ENCODE measurements at regions of chr21 and their contacts with region 1.

Region 1: DNA sequence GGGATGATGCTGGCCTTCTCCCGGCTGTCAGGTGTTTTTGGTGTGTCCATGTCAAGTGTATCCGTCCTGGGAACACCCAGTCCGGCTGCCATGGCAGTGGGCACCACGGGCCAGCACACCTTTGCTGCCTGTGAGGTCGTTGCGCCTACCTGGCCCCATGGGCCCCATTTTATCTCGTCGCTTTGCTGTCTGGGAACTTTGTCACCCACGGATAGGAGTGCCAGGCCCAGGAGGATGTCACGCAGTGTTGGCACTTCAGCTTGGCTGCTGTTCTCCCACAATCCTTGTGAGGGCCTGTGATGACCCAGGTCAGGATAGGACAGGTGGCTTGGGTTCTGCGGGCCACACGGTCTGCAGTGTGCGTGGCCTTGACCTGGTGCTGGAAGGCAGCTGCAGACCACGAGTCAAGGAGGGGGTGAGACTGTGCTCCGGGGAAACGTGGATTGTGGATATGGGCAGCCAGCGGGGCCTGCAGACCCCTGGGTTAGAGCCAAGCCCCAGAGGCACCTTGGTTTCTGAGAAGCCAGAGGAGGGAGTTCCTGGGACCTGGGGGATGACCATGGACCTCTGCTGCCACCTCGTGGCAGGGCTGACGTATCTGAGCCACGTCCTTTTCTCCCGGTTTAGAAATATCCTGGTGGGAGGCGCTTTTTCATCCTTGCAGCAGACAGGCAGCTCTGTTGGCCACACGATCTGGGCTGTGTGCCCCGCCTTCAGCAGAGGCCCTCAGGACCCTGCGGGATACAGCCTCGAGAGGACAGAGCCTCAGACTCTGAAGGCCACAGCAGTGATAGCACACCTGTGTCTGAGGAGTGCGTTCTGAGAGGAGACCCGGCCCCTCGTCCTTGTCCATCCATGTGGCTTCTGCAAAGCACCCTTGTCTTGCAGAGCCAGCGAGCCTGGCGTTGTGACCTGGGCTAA is 161.1 kb upstream of the COL6A1 start:
- DNase-seq: peak; percentile 73 to 79 (median 75)
- H3K4me3 ChIP-seq: no peak overlapping the region
- H3K4me3 Mint-ChIP-seq: no peak overlapping the region
- H3K27ac ChIP-seq: peak overlapping the region in 1 of 2 donors; percentile 53
- H3K27ac Mint-ChIP-seq: peak overlapping the region in 6 of 7 donors; percentile 50 to 85 (median 66)
- H3K4me1 ChIP-seq: peaks cover 24 to 27% of the 10 kb centered on the region in 2 donors
- H3K4me1 Mint-ChIP-seq: peaks cover 29% of the 10 kb centered on the region
- H3K27me3 ChIP-seq: no peaks in the 10 kb centered on the region
- H3K27me3 Mint-ChIP-seq: no peaks in the 10 kb centered on the region
- CTCF ChIP-seq: peak; percentile 89

Region 2: GRCh38 chr21:44949779-44950198 is 870.6 kb before region 1 on chr21:
- intact Hi-C with region 1: loop called in 1 of 2 experiments (anchors 5 kb)
- DNase-seq: peak; percentile 54 to 78 (median 67)
- H3K4me3 ChIP-seq: no peak overlapping the region
- H3K4me3 Mint-ChIP-seq: no peak overlapping the region
- H3K27ac ChIP-seq: no peak overlapping the region
- H3K27ac Mint-ChIP-seq: no peak overlapping the region
- H3K4me1 ChIP-seq: no peaks in the 10 kb centered on the region
- H3K4me1 Mint-ChIP-seq: no peaks in the 10 kb centered on the region
- H3K27me3 ChIP-seq: no peaks in the 10 kb centered on the region
- H3K27me3 Mint-ChIP-seq: peaks cover 0 to 2% (median 2%) of the 10 kb centered on the region in 3 donors
- CTCF ChIP-seq: peak; percentile 92

Region 3: GRCh38 chr21:45140346-45140940 is 680.0 kb before region 1 on chr21:
- intact Hi-C with region 1: loop called (anchors 2 to 5 kb)
- DNase-seq: peak; percentile 74 to 81 (median 77)
- H3K4me3 ChIP-seq: no peak overlapping the region
- H3K4me3 Mint-ChIP-seq: no peak overlapping the region
- H3K27ac ChIP-seq: no peak overlapping the region
- H3K27ac Mint-ChIP-seq: peak overlapping the region in 2 of 7 donors; percentile 26 to 65
- H3K4me1 ChIP-seq: peaks cover 0 to 4% of the 10 kb centered on the region in 2 donors
- H3K4me1 Mint-ChIP-seq: peaks cover 6% of the 10 kb centered on the region
- H3K27me3 ChIP-seq: no peaks in the 10 kb centered on the region
- H3K27me3 Mint-ChIP-seq: peaks cover 0 to 2% (median 1%) of the 10 kb centered on the region in 3 donors
- CTCF ChIP-seq: peak; percentile 87

Region 4: DNA sequence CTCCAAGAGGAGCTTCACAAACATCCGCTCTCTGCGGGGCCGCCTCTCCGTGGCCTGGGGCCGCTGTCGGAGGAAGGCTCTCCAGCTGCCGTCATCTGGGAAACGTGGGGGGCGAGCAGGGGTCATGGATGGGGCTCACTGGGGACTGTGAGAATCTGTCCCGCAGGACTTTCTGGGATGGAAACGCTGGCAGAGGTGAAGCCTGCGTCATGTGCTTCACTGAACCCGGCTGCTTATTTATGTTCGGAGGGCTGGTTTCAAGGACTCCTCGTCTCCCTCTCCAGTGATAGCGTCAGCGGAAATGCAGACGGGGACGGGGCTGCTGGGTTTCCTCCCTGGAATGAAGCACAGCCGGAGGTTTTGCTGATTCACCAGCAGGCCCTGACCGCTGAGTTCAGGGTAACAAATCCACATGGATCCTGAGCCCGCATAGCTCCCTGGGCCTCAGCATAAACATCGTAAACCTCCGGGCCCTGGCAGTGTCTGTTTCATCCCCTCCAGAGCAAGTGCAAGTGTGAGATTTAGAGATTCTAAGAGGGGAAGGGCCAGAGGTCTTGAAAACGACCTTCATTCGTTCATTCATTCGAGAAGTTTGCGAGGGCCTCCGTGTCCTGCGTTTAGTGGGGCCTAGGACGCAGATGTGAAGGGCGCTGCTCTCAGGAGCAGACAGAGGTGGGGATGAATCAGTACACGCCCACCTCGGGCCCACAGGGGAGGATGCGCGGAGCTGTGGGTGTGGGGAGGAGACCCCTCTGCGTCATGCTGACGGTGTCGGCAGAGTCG is 525.7 kb before region 1 on chr21:
- intact Hi-C with region 1: loop called (anchors 2 to 5 kb)
- DNase-seq: peak; percentile 7 to 24 (median 23)
- H3K4me3 ChIP-seq: no peak overlapping the region
- H3K4me3 Mint-ChIP-seq: peak overlapping the region; percentile 27 to 70
- H3K27ac ChIP-seq: no peak overlapping the region
- H3K27ac Mint-ChIP-seq: peak overlapping the region in 1 of 7 donors; percentile 55
- H3K4me1 ChIP-seq: peaks cover 14 to 22% of the 10 kb centered on the region in 2 donors
- H3K4me1 Mint-ChIP-seq: peaks cover 26% of the 10 kb centered on the region
- H3K27me3 ChIP-seq: peaks cover 0 to 2% of the 10 kb centered on the region in 2 donors
- H3K27me3 Mint-ChIP-seq: peaks cover 6 to 13% (median 7%) of the 10 kb centered on the region in 3 donors
- CTCF ChIP-seq: no peak

Region 5: GRCh38 chr21:45554477-45555175 is 265.8 kb before region 1 on chr21:
- intact Hi-C with region 1: loop called (anchors 2 to 5 kb)
- DNase-seq: peak; percentile 64 to 74 (median 65)
- H3K4me3 ChIP-seq: peak overlapping the region; percentile 67 to 95 (median 90)
- H3K4me3 Mint-ChIP-seq: peak overlapping the region; percentile 95 to 96
- H3K27ac ChIP-seq: peak overlapping the region; percentile 71 to 97
- H3K27ac Mint-ChIP-seq: peak overlapping the region; percentile 96 to 99 (median 98)
- H3K4me1 ChIP-seq: peaks cover 40 to 43% of the 10 kb centered on the region in 2 donors
- H3K4me1 Mint-ChIP-seq: peaks cover 36% of the 10 kb centered on the region
- H3K27me3 ChIP-seq: no peaks in the 10 kb centered on the region
- H3K27me3 Mint-ChIP-seq: peaks cover 0 to 12% (median 6%) of the 10 kb centered on the region in 3 donors
- CTCF ChIP-seq: peak; percentile 78

Region 6: DNA sequence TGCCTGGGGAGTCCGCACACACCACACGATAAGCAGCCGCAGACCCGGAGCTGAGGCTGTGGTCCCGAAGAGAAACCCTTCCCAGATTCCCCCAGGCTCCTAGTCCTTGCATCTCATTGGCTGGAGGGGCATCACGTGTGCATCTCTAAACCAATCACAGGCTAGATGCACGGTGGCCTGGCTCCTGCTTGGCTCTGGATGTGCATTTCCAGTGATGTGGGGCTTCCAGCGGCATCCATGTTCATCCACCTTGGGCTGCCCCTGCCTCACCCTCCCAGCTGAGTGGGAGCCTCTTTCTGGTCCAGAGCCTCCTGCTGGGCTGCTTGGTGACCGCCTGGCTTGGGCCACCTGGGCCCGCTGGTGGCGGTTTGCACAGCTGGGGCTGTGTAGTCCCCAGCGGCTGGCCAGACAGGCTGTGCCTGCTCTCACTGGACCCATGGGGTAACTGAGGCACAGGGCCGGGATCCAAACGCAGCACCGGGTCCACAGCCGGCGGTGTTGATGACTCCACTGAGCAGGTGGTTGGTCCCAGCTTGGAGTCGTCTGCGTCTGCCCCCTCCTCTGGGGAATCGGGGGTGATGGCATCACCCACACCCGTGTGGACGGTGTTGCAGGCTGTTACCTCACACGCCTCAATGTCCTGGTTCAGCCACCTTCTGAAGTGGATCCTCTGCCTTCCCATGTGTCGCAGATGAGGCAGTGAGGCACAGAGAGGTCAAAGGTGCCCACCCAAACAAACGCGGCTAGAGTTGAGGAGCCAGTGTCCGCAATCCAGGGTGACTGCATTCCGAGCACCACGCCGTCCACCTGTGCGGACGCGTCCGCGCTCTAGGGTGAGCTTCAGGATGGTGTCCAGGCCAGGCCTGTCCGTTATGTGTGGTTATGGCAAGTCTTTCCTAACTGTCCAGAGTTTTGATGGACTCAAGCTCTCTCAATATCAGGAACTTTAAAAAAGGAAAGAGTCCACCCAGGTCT is 202.4 kb after region 1 on chr21:
- intact Hi-C with region 1: no loop called
- DNase-seq: no peak
- H3K4me3 ChIP-seq: no peak overlapping the region
- H3K4me3 Mint-ChIP-seq: no peak overlapping the region
- H3K27ac ChIP-seq: no peak overlapping the region
- H3K27ac Mint-ChIP-seq: no peak overlapping the region
- H3K4me1 ChIP-seq: no peaks in the 10 kb centered on the region
- H3K4me1 Mint-ChIP-seq: peaks cover 2% of the 10 kb centered on the region
- H3K27me3 ChIP-seq: no peaks in the 10 kb centered on the region
- H3K27me3 Mint-ChIP-seq: peaks cover 6 to 17% (median 13%) of the 10 kb centered on the region in 3 donors
- CTCF ChIP-seq: no peak

Measured in CD14-positive monocyte (primary cell).